AG04450 (cell line): ENCODE measurements at regions of chr10 and their contacts with region 1.

Region 1: GRCh38 chr10:84059523-84059922 is 79.8 kb upstream of the GHITM start:
- DNase-seq: no peak
- H3K4me3 ChIP-seq: no peak overlapping the region
- H3K27ac ChIP-seq: no peak overlapping the region
- H3K27me3 ChIP-seq: no peaks in the 10 kb centered on the region
- CTCF ChIP-seq: peak; percentile 12; the same call in 1 of the 2 replicates

Region 2: GRCh38 chr10:84038035-84038434 is 21.5 kb before region 1 on chr10:
- CTCF ChIA-PET with region 1: no interaction called
- POLR2A ChIA-PET with region 1: no interaction called
- DNase-seq: no peak
- H3K4me3 ChIP-seq: no peak overlapping the region
- H3K27ac ChIP-seq: no peak overlapping the region
- H3K27me3 ChIP-seq: no peaks in the 10 kb centered on the region
- CTCF ChIP-seq: no peak

Region 3: GRCh38 chr10:84076540-84077195 is 17.1 kb after region 1 on chr10:
- CTCF ChIA-PET with region 1: interaction called, 16 read pairs
- POLR2A ChIA-PET with region 1: no interaction called
- DNase-seq: peak; percentile 1
- H3K4me3 ChIP-seq: no peak overlapping the region
- H3K27ac ChIP-seq: peak overlapping the region; percentile 25
- H3K27me3 ChIP-seq: no peaks in the 10 kb centered on the region
- CTCF ChIP-seq: peak; percentile 56